Right ventricle myocardium inferior (tissue), 1 donor: ENCODE measurements at regions of chr1 and their contacts with region 1.

Region 1: DNA sequence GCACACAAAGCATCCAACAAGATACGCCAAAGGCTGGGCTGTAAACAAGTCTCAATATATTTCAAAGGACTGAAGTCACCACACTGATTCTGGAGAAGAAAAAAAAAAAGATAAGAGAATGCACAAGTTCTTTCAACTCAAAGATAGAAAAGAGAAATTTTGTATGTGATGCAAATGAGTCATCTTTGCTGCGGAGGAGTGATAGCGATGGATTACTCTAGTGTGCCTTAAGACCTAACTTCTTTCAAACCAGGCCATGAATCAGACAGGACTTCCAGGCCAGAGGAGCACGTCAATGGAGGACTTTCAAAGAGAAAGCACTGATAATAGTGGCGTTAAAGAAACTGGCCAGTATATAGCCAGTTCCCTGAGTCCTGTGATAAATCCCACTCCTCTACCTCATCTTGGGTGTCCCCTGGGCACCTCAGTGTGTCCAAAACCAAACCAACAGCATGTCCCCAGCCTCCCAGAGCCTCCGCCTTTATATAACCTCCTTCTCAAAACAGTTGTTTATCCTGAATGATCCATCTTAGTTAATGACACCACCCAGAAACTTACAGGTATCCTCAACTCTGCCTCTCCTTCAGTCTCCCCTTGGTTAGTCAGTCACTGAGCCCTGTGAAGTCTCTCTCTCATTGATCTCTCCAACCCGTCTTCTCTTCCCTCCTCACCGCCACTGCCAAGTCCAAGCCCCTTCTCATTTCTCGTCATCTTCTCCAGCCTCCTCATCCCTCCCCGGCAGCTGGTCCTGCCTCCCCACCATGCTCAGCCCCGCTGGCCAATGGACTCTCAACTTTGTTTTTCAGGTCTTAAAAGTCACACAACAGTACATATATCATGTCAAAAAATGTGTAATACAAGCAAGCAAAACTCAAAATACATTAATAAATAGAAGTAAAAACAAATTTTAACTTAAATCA is 47.2 kb upstream of the IFFO2 start:
- DNase-seq: no peak
- ATAC-seq: no peak

Region 2: DNA sequence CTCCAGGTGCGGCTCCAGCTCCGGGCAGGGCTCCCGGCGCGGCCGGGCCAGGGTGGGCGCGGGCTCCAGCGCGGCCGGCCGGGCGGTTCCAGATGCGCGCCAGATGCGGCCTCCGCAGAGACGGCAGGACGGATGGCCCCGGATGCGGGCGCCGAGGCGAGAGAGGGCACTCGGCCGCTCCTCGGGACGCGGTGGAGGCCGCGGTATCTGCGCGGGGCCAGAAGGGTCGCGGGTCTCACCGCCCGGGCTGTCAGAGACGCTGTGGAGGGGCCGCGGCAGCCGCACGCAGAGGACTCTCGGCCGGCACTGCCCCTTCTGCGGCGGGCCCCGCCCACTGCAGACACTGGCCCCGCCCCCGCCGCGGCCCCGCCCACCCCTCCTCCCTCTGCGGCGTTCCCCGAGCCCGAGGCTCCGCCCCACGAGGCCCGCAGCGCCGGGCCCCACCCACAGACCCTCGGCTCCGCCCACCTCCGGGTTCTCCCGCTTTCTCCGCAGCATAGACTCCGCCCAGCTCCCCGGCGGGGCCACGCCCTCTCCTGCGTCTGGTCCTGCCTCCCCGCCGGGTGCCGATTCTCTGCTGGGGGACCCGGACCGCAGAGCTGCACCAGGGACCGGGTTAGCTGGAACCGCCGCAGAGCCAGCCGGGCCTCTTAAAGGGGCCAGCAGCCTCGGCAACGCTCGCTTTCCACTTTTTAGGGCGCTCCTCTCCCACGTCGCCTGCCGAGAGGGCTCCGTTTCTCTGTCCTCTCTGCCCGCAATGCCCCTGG is 47.1 kb before region 1 on chr1 and contains the start of gene IFFO2:
- intact Hi-C with region 1: loop called (anchors 1 kb)
- DNase-seq: peak; percentile 99
- ATAC-seq: peak; percentile 99
- total RNA-seq, gene IFFO2: 5.2 TPM

Region 3: DNA sequence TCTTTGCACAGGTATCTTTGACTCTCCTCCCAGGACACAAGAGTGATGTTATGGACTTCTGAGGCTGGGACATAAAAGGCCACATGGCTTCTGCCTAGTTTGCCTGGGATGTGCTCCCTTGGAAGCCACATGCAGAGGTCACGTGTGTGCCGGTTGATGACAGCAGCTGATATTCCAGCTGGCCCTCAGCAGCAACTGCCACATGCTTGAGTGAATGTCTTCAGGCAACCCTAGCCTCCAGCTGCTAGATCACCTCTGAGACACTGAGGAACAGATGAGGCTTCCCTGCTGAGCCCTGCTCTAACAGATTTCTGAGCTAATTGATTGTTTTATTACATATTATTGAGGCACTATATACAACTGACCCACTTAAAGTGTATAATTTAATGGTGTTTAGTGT is 296.6 kb after region 1 on chr1:
- intact Hi-C with region 1: no loop called
- DNase-seq: no peak
- ATAC-seq: no peak

Region 4: DNA sequence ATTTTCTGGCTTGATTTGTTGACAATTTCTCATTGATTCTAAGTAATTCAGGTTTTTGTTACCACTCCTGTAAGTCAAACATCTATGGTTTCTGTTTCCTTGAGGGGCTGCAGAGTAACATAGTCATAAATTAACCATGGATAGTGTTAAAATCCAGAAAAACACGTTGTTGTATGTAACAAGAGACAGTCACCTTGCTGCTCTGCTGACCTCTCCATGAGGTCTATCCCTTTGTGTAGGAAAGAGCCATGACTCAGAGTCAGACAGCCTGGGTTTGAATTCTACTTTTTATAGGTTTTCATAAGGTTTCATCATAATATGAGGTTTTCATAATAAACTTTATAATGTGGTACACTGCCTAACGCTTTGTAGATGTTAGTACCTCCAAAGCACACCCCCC is 612.9 kb after region 1 on chr1:
- intact Hi-C with region 1: no loop called
- DNase-seq: no peak
- ATAC-seq: no peak